ENCODE measurements at regions of chr11 and their contacts with region 1.

Region 1: DNA sequence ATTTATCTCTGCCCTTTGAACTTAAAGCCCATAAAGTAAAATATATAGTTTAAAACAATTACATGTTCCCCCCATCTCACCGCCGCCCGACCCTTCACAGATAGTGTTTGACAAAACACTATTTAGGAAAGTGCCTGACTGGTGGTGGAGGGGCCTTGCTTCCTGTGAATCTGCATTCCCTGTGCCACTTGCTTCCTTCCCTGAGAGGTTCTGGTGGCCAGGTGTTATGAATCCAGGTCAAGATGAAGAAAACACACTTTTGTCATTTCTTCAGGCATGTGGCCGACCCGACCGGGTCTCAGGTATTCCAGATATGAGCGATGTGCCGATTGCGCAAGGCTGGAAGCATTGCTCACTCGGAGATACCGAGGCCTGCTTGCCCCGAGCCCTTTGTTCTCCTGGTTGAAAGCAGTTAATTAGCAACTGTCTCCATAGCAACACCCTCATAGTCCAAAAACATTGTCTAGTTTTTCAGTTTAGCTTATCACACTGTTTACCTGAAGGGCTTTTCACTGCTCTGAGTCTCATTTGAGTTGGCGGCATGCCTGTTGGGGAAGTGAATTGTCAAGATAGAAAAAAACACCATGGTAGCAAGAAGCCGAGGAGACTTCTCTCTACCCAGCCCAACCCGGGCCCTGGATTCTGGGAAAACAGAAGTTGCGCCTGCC is 128.3 kb downstream of the TEAD1 start:
- DNase-seq: peak; percentile 78
- H3K4me3 ChIP-seq: no peak overlapping the region
- CTCF ChIP-seq: no peak

Region 2: DNA sequence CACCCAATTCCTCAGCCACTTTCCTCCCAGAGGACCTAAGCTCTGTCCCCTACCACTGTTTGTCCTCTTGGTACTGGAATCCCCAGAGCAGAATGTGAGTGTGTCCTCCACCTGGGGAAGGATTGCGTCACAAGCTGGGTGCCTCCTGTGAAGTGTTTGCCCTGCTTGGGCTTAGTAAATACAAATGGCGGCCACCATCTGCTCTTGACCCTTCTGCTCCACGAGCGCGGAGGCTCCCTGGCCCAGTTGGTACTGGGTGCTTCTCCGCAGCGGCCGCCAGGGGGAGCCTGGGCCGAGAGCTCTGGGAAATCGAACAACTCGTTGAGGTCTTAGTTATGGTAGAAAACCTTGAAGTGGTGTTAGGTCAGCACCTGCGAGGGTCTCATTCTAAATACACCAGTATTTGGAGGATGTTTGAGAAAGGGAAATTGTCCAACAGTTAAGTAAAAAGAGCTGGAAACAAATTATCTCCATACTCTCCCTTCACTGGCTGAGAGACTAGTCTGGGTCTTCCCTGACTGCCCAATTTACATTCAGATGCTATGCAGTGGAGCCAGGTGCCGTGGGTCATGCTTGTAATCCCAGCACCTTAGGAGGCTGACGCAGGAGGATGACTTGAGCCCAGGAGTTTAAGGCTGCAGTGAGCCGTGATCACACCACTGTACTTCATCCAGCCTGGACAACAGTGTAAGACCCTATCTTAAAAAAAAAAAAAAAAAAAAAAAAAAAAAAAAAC is 203.0 kb before region 1 on chr11:
- in situ Hi-C with region 1: no loop called
- DNase-seq: no peak
- H3K4me3 ChIP-seq: no peak overlapping the region
- CTCF ChIP-seq: peak; percentile 60

Region 3: GRCh38 chr11:12704049-12704448 is 98.5 kb before region 1 on chr11:
- in situ Hi-C with region 1: no loop called
- DNase-seq: peak; percentile 35
- H3K4me3 ChIP-seq: no peak overlapping the region
- CTCF ChIP-seq: no peak

Region 4: DNA sequence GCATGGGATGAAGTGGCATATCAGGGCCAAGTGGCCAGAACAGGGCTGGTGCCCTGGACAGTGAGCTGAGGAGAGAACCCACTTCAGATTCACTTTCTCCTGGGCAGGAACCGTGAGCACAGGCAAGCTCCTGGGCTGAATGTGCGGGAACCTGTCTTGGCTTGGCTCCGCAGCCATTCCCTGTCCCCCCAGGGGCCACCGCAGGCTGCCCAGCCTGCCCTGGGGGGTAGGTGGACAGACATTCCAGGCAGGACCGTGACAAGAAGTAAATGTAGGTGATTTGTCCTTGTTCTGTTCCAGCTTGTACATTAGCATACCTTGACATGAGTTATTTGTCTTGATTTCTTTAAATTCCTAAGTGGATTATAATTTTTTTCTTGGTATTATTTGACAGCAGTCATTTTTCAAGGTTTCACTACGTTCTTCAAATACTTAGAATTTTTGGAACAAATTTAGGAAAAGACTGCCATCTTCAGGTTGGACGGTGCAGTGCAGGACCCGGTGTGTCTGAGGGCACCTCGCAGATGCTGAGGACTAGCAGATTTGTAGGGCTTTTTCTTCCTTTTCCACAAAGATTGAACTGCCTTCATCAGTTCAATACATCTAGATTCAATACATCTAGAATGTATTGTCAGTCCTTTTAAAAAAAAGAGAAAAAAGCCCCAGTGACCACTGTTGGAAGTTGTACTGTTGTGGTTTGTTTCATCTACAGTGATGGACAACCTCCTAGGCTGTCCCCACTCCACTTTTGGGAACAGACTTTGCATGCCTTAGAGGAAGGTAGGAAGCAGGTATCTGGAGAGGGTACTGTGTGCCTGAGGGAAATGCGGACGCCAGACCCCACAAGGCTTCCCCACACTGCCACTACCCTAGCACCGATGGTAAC is 91.5 kb after region 1 on chr11:
- in situ Hi-C with region 1: loop called (anchors 5 kb)
- DNase-seq: peak; percentile 53
- H3K4me3 ChIP-seq: no peak overlapping the region
- CTCF ChIP-seq: peak; percentile 86

Measured in astrocyte of the cerebellum (primary cell).